Activated CD4-positive, alpha-beta T cell treated with anti-CD3 and anti-CD28 coated beads, Interleukin-2, amount 10 ng/mL, durations not matched to agents 24 days and 14 days (primary cell): ENCODE measurements at regions of chr19 and their contacts with region 1.

Region 1: DNA sequence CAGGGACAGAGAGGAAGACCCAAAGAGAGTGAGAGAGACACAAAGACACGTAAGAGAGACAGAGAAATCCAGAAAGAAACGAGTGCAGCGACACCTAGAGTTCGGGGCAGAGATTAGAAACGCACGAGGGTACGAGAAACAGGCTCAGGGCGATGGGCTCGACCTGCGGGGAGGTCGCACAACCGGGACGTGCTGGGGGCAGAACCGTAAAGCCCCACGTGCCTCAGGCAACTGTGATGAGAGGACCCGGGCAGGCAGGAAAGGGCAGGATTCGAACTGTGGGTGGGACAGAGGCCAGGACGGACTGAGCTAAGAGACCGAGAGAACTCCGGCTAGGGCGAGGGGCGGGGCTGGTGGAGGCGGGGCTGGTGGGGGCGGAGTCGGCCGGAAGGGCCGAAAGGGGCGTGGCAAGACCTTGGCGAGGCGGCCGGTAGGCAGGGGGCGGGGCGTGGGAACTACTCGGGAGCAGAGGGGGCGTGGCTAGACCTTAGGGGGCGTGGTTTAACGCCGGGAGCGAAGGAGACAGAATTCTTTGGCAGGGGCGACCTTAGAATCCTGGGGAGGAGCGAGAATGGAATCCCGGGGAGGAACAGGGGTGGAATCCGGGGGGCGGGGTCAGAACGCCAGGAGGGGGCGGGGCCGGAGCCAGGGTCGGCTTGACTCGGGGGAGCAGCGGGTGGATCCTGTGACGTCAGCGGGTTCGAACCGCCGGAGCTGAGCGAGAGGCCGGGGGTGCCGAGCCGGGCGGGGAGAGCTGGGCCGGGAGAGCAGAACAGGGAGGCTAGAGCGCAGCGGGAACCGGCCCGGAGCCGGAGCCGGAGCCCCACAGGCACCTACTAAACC is at the start of gene NECTIN2:
- DNase-seq: peak; percentile 93
- H3K4me3 Mint-ChIP-seq: peak within 1 kb of the TSS; percentile 90
- H3K27ac Mint-ChIP-seq: peak within 1 kb of the TSS; percentile 85
- H3K4me1 Mint-ChIP-seq: peaks cover 19% of the 10 kb centered on the region
- H3K27me3 Mint-ChIP-seq: peaks cover 44% of the 10 kb centered on the region
- total RNA-seq, gene NECTIN2: 0.19 and 0.44 TPM in 2 replicates

Region 2: GRCh38 chr19:44653977-44654774 is 191.7 kb before region 1 on chr19:
- intact Hi-C with region 1: loop called (anchors 10 kb)
- DNase-seq: peak; percentile 91
- H3K4me3 Mint-ChIP-seq: no peak overlapping the region
- H3K27ac Mint-ChIP-seq: no peak overlapping the region
- H3K4me1 Mint-ChIP-seq: peaks cover 11% of the 10 kb centered on the region
- H3K27me3 Mint-ChIP-seq: no peaks in the 10 kb centered on the region

Region 3: DNA sequence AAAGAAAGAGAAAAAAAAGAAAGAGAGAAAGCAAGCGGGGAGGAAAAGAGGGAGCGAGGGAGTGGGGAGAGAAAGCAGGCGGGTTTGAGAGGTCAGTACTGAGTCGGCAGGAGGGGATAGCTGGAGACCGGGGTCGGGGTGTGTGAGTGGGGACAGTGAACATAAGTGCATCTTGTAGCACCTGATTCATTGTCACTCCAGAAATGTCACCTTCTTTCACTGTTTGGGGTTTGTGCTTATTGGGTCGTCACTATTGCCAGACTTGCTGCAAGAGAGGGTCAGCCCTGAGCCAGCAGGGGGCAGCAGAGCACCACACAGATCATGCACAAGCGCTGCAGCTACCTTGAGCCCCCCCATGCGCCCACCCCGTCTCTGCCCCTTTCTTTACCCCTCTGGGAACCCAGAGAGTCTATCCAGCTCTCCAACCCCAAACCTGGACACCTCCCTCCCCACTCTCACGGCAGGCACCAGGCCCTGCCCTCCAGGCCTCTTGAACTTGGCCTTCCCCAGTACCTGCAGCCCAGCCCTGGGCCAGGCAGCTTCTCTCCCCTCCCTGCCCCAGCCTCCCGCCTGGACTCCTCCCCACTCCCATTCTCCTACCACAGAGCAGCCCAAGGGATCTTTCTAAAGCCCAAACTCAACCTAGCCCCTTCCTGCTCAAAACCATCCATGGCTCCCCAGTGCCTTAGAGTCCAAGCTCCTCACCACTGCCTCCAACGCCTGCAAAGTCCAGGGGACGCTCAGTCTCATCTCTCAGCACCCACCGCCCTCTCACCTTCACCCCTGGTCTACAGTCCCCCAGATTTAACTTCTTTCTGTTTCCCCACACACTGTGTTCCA is 156.6 kb before region 1 on chr19:
- intact Hi-C with region 1: loop called (anchors 1 kb)
- DNase-seq: peak; percentile 93
- H3K4me3 Mint-ChIP-seq: no peak overlapping the region
- H3K27ac Mint-ChIP-seq: peak overlapping the region; percentile 27
- H3K4me1 Mint-ChIP-seq: peaks cover 38% of the 10 kb centered on the region
- H3K27me3 Mint-ChIP-seq: peaks cover 12% of the 10 kb centered on the region

Region 4: GRCh38 chr19:44723952-44724319 is 121.9 kb before region 1 on chr19:
- intact Hi-C with region 1: loop called (anchors 1 kb)
- DNase-seq: peak; percentile 95
- H3K4me3 Mint-ChIP-seq: peak overlapping the region; percentile 40
- H3K27ac Mint-ChIP-seq: peak overlapping the region; percentile 45
- H3K4me1 Mint-ChIP-seq: peaks cover 46% of the 10 kb centered on the region
- H3K27me3 Mint-ChIP-seq: no peaks in the 10 kb centered on the region

Region 5: DNA sequence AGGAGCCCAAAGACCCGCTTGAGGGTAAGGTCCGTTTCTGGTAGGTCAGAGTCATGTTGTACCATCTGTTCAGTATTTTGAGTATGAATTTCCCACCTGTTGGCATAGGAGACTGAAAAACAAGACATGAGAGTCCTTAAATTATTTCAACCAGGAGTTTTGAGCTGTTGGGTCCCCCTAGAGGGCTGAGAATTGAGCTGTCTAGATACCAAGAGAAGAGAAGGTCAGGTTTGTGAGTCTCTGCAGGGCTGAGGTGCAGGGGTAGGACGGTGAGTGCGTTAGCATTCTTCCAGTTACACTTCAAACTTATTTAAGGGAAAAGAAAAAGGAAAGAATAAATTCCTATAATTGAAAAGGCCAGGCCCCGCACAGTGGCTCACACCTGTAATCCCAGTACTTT is 63.1 kb before region 1 on chr19:
- intact Hi-C with region 1: loop called (anchors 1 kb)
- DNase-seq: no peak
- H3K4me3 Mint-ChIP-seq: no peak overlapping the region
- H3K27ac Mint-ChIP-seq: no peak overlapping the region
- H3K4me1 Mint-ChIP-seq: peaks cover 6% of the 10 kb centered on the region
- H3K27me3 Mint-ChIP-seq: peaks cover 4% of the 10 kb centered on the region

Region 6: GRCh38 chr19:44800461-44800860 is 45.4 kb before region 1 on chr19:
- intact Hi-C with region 1: loop called (anchors 1 kb)
- DNase-seq: peak; percentile 96
- H3K4me3 Mint-ChIP-seq: no peak overlapping the region
- H3K27ac Mint-ChIP-seq: no peak overlapping the region
- H3K4me1 Mint-ChIP-seq: peaks cover 12% of the 10 kb centered on the region
- H3K27me3 Mint-ChIP-seq: no peaks in the 10 kb centered on the region

Region 7: GRCh38 chr19:44879309-44880065 is 33.7 kb after region 1 on chr19:
- intact Hi-C with region 1: no loop called
- DNase-seq: no peak
- H3K4me3 Mint-ChIP-seq: no peak overlapping the region
- H3K27ac Mint-ChIP-seq: no peak overlapping the region
- H3K4me1 Mint-ChIP-seq: peaks cover 2% of the 10 kb centered on the region
- H3K27me3 Mint-ChIP-seq: no peaks in the 10 kb centered on the region

Region 8: GRCh38 chr19:44890366-44891015 is 44.7 kb after region 1 on chr19:
- intact Hi-C with region 1: loop called (anchors 2 kb)
- DNase-seq: peak; percentile 100
- H3K4me3 Mint-ChIP-seq: peak overlapping the region; percentile 84
- H3K27ac Mint-ChIP-seq: peak overlapping the region; percentile 97
- H3K4me1 Mint-ChIP-seq: peaks cover 25% of the 10 kb centered on the region
- H3K27me3 Mint-ChIP-seq: no peaks in the 10 kb centered on the region